ENCODE measurements at regions of chrX and their contacts with region 1.

Region 1: GRCh38 chrX:19840899-19841648 is 46.3 kb downstream of the SH3KBP1 start:
- DNase-seq: peak; percentile 44 to 74
- ATAC-seq: peak; percentile 68 to 84 (median 82)
- H3K4me3 ChIP-seq: no peak overlapping the region
- H3K4me3 Mint-ChIP-seq: peak overlapping the region; percentile 67
- H3K27ac ChIP-seq: peak overlapping the region; percentile 39
- H3K27ac Mint-ChIP-seq: peak overlapping the region; percentile 89 to 94
- H3K4me1 ChIP-seq: peaks cover 54% of the 10 kb centered on the region
- H3K4me1 Mint-ChIP-seq: peaks cover 43 to 45% of the 10 kb centered on the region in 2 donors
- H3K27me3 ChIP-seq: no peaks in the 10 kb centered on the region
- H3K27me3 Mint-ChIP-seq: no peaks in the 10 kb centered on the region
- CTCF ChIP-seq: no peak

Region 2: DNA sequence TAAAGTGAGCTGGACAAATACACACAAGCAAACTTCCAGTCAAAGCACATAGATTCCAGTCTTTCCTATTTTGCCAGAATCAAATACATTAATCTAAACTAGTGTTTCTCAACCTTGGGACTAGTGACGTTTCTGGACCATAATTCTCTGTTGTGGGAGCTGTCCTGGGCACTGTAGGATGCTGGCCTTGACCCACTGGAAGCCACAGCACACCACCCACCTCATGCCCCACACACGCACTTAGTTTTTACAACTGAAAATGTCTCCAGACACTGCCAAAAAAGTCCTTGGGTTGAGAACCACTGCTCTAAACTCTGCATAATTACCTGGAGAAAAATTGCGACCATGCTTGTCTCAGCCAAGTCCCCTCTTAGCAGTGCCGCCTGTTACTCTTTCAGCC is 383.4 kb before region 1 on chrX:
- intact Hi-C with region 1: no loop called
- DNase-seq: no peak
- ATAC-seq: no peak
- H3K4me3 ChIP-seq: no peak overlapping the region
- H3K4me3 Mint-ChIP-seq: no peak overlapping the region
- H3K27ac ChIP-seq: no peak overlapping the region
- H3K27ac Mint-ChIP-seq: no peak overlapping the region
- H3K4me1 ChIP-seq: no peaks in the 10 kb centered on the region
- H3K4me1 Mint-ChIP-seq: no peaks in the 10 kb centered on the region
- H3K27me3 ChIP-seq: no peaks in the 10 kb centered on the region
- H3K27me3 Mint-ChIP-seq: no peaks in the 10 kb centered on the region
- CTCF ChIP-seq: no peak

Region 3: DNA sequence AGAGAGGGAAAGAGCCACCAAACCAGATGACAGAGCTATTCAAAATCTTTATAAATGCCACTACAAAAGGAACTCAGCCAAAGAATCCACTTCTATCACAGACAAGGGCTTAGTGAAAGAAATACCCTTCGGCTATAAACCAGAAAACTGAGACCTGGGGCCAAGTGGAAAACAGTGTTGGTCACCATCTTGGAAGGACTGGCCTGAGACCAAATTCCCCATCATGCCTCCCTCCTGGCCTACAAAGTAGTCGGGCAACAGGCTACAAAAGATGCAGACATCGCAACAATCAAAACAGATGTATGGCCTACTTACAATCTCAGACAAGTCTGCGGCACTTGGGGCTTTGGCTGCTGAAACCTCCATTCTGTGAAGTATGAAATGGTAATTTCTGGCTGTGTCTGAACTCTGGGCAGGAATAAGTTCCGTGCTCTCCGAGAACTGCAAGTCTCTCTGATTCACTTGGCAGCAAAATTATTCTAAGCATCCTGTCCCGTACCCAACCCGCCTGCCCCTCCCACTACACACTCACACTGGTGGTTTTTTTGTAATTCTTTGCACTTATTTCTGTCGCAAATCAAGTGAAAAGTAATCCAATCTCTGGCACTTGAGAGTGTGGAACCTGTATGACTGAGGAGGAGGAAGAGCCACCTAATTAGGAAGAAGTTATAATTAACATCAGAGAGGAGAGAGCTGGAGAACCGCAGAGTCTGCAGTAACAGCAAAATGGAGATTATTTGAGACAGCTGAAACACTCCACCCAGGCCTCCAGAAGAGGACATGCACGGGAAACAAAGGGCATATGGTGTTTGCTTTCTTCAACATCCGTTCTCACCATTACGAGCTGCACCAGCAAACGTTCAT is 41.5 kb before region 1 on chrX:
- intact Hi-C with region 1: loop called (anchors 5 kb)
- DNase-seq: peak in 1 of 2 donors; percentile 74
- ATAC-seq: peak; percentile 76 to 83 (median 79)
- H3K4me3 ChIP-seq: peak overlapping the region; percentile 32
- H3K4me3 Mint-ChIP-seq: peak overlapping the region; percentile 93
- H3K27ac ChIP-seq: peak overlapping the region; percentile 65
- H3K27ac Mint-ChIP-seq: peak overlapping the region; percentile 86 to 95
- H3K4me1 ChIP-seq: peaks cover 59% of the 10 kb centered on the region
- H3K4me1 Mint-ChIP-seq: peaks cover 61 to 68% of the 10 kb centered on the region in 2 donors
- H3K27me3 ChIP-seq: no peaks in the 10 kb centered on the region
- H3K27me3 Mint-ChIP-seq: peaks cover 0 to 6% of the 10 kb centered on the region in 2 donors
- CTCF ChIP-seq: no peak

Region 4: DNA sequence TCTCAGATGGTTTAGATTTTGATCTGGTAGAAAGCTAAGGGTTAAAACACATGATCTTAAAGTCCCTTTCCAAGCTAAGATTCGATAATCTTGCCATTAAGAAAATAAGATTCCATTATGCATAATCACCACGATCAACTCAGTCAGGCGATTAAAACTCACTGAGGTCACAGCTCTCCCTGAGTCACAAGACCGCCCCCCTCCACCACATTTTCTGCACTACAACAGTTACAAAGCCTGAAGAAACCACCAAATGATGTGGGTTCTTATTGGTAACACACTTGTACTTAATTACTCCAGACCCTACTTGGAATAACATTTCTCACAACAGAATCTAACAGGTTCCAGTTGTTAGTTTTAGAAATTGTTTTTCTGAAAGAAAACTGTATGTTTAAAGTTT is 16.5 kb before region 1 on chrX:
- intact Hi-C with region 1: loop called (anchors 1 kb)
- DNase-seq: peak; percentile 49 to 62
- ATAC-seq: peak; percentile 71 to 96 (median 89)
- H3K4me3 ChIP-seq: no peak overlapping the region
- H3K4me3 Mint-ChIP-seq: peak overlapping the region; percentile 55
- H3K27ac ChIP-seq: peak overlapping the region; percentile 61
- H3K27ac Mint-ChIP-seq: peak overlapping the region; percentile 84
- H3K4me1 ChIP-seq: peaks cover 27% of the 10 kb centered on the region
- H3K4me1 Mint-ChIP-seq: peaks cover 23 to 36% of the 10 kb centered on the region in 2 donors
- H3K27me3 ChIP-seq: no peaks in the 10 kb centered on the region
- H3K27me3 Mint-ChIP-seq: peaks cover 0 to 4% of the 10 kb centered on the region in 2 donors
- CTCF ChIP-seq: no peak

Measured in natural killer cell (primary cell).